ENCODE measurements at regions of chr10 and their contacts with region 1.

Region 1: GRCh38 chr10:69506834-69507721 is 55.8 kb downstream of the TSPAN15 start:
- DNase-seq: no peak
- H3K4me3 Mint-ChIP-seq: peak overlapping the region; percentile 42
- H3K27ac Mint-ChIP-seq: peak overlapping the region; percentile 50
- H3K4me1 Mint-ChIP-seq: peaks cover 9% of the 10 kb centered on the region
- H3K27me3 Mint-ChIP-seq: peaks cover 21% of the 10 kb centered on the region

Region 2: DNA sequence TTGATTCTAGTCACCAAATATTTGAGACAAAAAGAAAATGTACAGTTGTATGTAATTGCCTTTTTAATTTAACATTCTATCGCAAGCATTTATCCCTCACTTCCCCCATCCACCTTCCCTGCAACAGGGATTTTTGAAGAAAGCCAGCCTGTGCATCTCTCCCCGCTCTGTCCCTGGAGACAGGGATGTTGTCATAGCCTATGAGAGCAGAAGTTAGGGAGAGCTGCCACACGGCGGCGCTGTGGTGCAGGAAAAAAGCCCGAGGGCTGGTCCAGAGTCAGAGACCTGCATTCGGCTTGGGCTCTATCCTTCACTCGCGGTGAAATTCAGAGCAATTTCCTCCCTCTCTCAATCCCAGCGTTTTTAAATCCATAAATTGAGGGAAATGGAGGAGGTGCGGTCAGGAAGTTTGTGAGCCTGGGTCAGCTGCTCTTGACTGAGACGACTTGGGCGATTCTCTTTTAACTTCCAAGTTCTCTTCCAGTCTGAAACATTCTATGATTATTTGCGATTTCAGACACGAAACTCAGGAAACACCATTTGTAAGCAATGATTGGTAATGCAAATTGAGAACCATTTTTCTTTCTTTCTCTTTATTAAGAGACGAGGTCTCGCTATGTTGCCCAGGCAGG is 269.4 kb before region 1 on chr10:
- intact Hi-C with region 1: loop called (anchors 1 kb)
- DNase-seq: peak; percentile 78
- H3K4me3 Mint-ChIP-seq: no peak overlapping the region
- H3K27ac Mint-ChIP-seq: no peak overlapping the region
- H3K4me1 Mint-ChIP-seq: peaks cover 15% of the 10 kb centered on the region
- H3K27me3 Mint-ChIP-seq: peaks cover 2% of the 10 kb centered on the region

Region 3: GRCh38 chr10:69425511-69426298 is 81.4 kb before region 1 on chr10:
- intact Hi-C with region 1: loop called (anchors 1 kb)
- DNase-seq: no peak
- H3K4me3 Mint-ChIP-seq: no peak overlapping the region
- H3K27ac Mint-ChIP-seq: no peak overlapping the region
- H3K4me1 Mint-ChIP-seq: peaks cover 37% of the 10 kb centered on the region
- H3K27me3 Mint-ChIP-seq: peaks cover 2% of the 10 kb centered on the region

Region 4: GRCh38 chr10:69451209-69451783 is 55.8 kb before region 1 on chr10 and contains the start of gene TSPAN15:
- intact Hi-C with region 1: loop called (anchors 1 kb)
- DNase-seq: peak; percentile 80
- H3K4me3 Mint-ChIP-seq: peak within 1 kb of the TSS; percentile 90
- H3K27ac Mint-ChIP-seq: no peak within 1 kb of the TSS
- H3K4me1 Mint-ChIP-seq: peaks cover 35% of the 10 kb centered on the region
- H3K27me3 Mint-ChIP-seq: peaks cover 18% of the 10 kb centered on the region
- total RNA-seq, gene TSPAN15: 1.6 and 2.7 TPM in 2 replicates

Measured in activated T-helper 1 cell treated with anti-CD3 and anti-CD28 coated beads, Interleukin-12 subunit alpha, Interleukin-12 subunit beta, Interleukin-2, Interleukin-4 antibody, amounts not matched to agents 30 ng/mL and 10 ng/mL and 1 ng/mL, durations not matched to agents 14 hours and 24 hours and 36 hours (primary cell).